ENCODE measurements at regions of chr2 and their contacts with region 1.

Region 1: GRCh38 chr2:46812361-46813024 is 103.1 kb downstream of the MCFD2 start:
- DNase-seq: no peak
- ATAC-seq: peak; percentile 56
- H3K4me3 ChIP-seq: no peak overlapping the region
- H3K27ac ChIP-seq: peak overlapping the region; percentile 79
- H3K4me1 ChIP-seq: peaks cover 52% of the 10 kb centered on the region
- H3K27me3 ChIP-seq: no peaks in the 10 kb centered on the region
- CTCF ChIP-seq: no peak

Region 2: DNA sequence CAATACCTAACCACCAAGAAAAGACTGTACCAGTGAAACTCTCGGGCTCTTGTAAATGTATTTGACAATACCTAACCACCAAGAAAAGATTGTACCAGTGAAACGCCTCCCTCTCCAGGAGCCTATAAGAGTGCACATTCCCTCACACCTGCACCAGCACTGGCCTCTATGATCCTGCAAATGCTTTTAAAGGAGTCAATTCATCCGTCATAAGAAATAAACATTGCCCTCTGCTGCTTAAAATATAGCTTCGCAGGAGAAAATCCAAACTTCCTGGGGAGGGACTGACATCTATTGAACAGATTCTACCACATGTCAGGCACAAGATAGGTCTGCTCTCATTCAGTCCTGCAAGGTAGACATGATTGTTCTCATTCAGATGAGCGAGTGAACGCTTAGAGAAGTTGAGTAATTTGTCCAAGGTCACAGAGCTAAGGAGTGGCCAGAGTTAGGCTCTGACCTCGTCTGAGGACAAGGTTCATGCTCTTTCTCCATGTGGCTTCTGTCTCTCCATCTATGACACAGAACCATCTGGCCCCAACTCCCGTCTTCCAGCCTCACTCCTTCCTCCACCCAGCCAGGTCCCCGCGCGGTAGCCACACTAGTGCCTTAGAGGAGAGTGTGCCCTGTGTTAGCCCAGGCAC is 64.4 kb after region 1 on chr2:
- intact Hi-C with region 1: loop called (anchors 10 kb)
- DNase-seq: no peak
- ATAC-seq: peak; percentile 75
- H3K4me3 ChIP-seq: no peak overlapping the region
- H3K27ac ChIP-seq: no peak overlapping the region
- H3K4me1 ChIP-seq: peaks cover 41% of the 10 kb centered on the region
- H3K27me3 ChIP-seq: no peaks in the 10 kb centered on the region
- CTCF ChIP-seq: peak; percentile 63

Region 3: GRCh38 chr2:47065771-47066380 is 253.4 kb after region 1 on chr2:
- intact Hi-C with region 1: no loop called
- DNase-seq: no peak
- ATAC-seq: peak; percentile 38
- H3K4me3 ChIP-seq: no peak overlapping the region
- H3K27ac ChIP-seq: peak overlapping the region; percentile 60
- H3K4me1 ChIP-seq: peaks cover 69% of the 10 kb centered on the region
- H3K27me3 ChIP-seq: no peaks in the 10 kb centered on the region
- CTCF ChIP-seq: no peak

Region 4: DNA sequence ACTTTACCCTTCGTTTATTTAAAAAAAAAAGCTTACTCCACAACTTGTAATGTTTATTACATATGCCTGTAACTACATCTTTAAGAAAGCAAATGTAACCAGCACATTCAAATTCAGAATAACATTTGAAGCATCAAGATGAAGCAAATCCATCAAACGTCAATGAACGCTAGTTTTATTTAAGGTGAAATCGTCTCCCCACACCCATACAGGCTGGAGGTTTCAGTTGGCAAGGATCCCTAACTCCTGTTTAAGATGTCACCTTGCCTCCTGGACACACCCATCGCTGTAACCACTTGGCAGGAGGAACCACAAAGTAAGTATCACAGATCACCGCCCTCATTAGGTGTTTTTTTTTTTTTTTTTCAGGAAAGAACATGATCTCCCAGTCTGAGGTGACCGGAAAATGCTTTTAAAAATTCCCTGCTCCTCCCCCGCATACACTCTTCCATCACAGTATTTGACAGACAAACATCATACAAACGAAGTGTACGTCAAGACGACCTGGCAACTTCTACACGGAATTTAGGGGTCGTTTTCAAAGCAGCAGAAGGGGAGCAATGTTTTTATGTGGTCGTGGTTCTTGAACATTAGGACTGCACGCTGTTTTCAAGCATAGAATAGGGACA is 362.4 kb after region 1 on chr2:
- intact Hi-C with region 1: no loop called
- DNase-seq: no peak
- ATAC-seq: peak; percentile 11
- H3K4me3 ChIP-seq: peak overlapping the region; percentile 68
- H3K27ac ChIP-seq: peak overlapping the region; percentile 100
- H3K4me1 ChIP-seq: peaks cover 50% of the 10 kb centered on the region
- H3K27me3 ChIP-seq: no peaks in the 10 kb centered on the region
- CTCF ChIP-seq: no peak